ENCODE measurements at regions of chr9 and their contacts with region 1.

Region 1: GRCh38 chr9:126914458-126915280 is at the start of gene RALGPS1:
- DNase-seq: peak; percentile 90 to 98
- H3K4me3 ChIP-seq: peak within 1 kb of the TSS; percentile 61
- H3K27ac ChIP-seq: no peak within 1 kb of the TSS
- H3K4me1 ChIP-seq: peaks cover 6% of the 10 kb centered on the region; the same call in 1 of the 2 replicates
- H3K27me3 ChIP-seq: no peaks in the 10 kb centered on the region
- CTCF ChIP-seq: no peak
- total RNA-seq, gene RALGPS1: 23.3 and 25.8 TPM in 2 replicates

Region 2: GRCh38 chr9:126763130-126763764 is 151.4 kb before region 1 on chr9:
- CTCF ChIA-PET with region 1: no interaction called
- POLR2A ChIA-PET with region 1: no interaction called
- intact Hi-C with region 1: no loop called
- DNase-seq: no peak
- H3K4me3 ChIP-seq: no peak overlapping the region
- H3K27ac ChIP-seq: no peak overlapping the region
- H3K4me1 ChIP-seq: no peaks in the 10 kb centered on the region
- H3K27me3 ChIP-seq: peaks cover 7% of the 10 kb centered on the region; the same call in 1 of the 2 replicates
- CTCF ChIP-seq: no peak

Region 3: GRCh38 chr9:126860077-126860756 is 54.5 kb before region 1 on chr9 and contains the start of gene ZBTB34:
- CTCF ChIA-PET with region 1: no interaction called
- POLR2A ChIA-PET with region 1: no interaction called
- intact Hi-C with region 1: loop called (anchors 2 kb)
- DNase-seq: peak; percentile 44 to 79
- H3K4me3 ChIP-seq: peak within 1 kb of the TSS; percentile 75
- H3K27ac ChIP-seq: peak within 1 kb of the TSS; percentile 38; the same call in 1 of the 2 replicates
- H3K4me1 ChIP-seq: peaks cover 15% of the 10 kb centered on the region
- H3K27me3 ChIP-seq: no peaks in the 10 kb centered on the region
- CTCF ChIP-seq: peak; percentile 99
- total RNA-seq, gene ZBTB34: 8.2 and 9.0 TPM in 2 replicates

Region 4: DNA sequence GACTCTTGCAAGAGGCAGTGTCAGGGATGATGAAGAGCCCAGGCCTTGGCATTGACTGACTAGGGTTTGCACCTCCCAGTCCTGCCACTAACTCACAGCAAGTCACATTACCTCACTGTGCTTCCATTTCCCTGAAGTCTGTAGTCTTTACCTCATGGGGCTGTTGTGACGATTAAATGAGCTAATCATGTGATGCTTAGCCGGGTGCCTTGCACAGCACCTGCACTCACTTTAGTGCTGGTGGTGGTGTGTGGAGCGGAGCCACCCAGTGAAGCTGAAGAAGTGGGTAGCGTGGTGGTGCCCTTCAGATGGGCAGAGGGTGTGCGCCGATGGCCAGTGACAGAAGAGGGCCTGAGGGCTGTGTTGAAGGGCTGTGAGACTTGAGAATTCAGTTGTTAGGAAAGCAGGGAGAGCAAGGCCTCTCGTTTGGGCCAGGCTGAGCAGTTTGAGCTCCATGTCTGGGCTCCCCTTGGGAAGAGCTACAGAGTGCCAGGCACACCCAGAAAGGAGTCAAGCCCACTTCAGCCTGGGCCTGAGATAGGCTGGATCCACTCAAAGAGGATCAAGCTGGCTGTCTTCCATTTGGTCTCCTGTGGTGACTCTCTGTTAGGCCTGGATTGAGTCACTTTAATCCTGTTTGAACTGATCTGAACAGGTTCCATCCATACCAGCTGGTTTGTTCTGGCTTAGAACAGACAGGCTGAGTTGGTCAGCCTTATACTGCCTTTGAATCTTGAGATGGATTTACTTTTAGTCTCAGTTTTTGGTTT is 42.4 kb after region 1 on chr9:
- CTCF ChIA-PET with region 1: no interaction called
- POLR2A ChIA-PET with region 1: no interaction called
- intact Hi-C with region 1: no loop called
- DNase-seq: peak; percentile 10 to 64
- H3K4me3 ChIP-seq: no peak overlapping the region
- H3K27ac ChIP-seq: peak overlapping the region; percentile 52; the same call in 1 of the 2 replicates
- H3K4me1 ChIP-seq: peaks cover 20% of the 10 kb centered on the region
- H3K27me3 ChIP-seq: no peaks in the 10 kb centered on the region
- CTCF ChIP-seq: no peak

Measured in PC-9 (cell line).